ENCODE measurements at regions of chr21 and their contacts with region 1.

Region 1: GRCh38 chr21:36606287-36606982 is 92.5 kb upstream of the SIM2 start:
- DNase-seq: no peak

Region 2: DNA sequence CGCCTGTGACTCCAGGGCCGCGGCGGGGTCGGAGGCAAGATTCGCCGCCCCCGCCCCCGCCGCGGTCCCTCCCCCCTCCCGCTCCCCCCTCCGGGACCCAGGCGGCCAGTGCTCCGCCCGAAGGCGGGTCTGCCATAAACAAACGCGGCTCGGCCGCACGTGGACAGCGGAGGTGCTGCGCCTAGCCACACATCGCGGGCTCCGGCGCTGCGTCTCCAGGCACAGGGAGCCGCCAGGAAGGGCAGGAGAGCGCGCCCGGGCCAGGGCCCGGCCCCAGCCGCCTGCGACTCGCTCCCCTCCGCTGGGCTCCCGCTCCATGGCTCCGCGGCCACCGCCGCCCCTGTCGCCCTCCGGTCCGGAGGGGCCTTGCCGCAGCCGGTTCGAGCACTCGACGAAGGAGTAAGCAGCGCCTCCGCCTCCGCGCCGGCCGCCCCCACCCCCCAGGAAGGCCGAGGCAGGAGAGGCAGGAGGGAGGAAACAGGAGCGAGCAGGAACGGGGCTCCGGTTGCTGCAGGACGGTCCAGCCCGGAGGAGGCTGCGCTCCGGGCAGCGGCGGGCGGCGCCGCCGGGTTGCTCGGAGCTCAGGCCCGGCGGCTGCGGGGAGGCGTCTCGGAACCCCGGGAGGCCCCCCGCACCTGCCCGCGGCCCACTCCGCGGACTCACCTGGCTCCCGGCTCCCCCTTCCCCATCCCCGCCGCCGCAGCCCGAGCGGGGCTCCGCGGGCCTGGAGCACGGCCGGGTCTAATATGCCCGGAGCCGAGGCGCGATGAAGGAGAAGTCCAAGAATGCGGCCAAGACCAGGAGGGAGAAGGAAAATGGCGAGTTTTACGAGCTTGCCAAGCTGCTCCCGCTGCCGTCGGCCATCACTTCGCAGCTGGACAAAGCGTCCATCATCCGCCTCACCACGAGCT is 92.8 kb after region 1 on chr21 and contains the start of gene SIM2:
- intact Hi-C with region 1: loop called in 1 of 2 experiments (anchors 10 kb)
- DNase-seq: no peak
- total RNA-seq, gene SIM2: not detected